Activated CD4-positive, alpha-beta T cell treated with anti-CD3 and anti-CD28 coated beads for 36 hours (primary cell): ENCODE measurements at regions of chr4 and their contacts with region 1.

Region 1: DNA sequence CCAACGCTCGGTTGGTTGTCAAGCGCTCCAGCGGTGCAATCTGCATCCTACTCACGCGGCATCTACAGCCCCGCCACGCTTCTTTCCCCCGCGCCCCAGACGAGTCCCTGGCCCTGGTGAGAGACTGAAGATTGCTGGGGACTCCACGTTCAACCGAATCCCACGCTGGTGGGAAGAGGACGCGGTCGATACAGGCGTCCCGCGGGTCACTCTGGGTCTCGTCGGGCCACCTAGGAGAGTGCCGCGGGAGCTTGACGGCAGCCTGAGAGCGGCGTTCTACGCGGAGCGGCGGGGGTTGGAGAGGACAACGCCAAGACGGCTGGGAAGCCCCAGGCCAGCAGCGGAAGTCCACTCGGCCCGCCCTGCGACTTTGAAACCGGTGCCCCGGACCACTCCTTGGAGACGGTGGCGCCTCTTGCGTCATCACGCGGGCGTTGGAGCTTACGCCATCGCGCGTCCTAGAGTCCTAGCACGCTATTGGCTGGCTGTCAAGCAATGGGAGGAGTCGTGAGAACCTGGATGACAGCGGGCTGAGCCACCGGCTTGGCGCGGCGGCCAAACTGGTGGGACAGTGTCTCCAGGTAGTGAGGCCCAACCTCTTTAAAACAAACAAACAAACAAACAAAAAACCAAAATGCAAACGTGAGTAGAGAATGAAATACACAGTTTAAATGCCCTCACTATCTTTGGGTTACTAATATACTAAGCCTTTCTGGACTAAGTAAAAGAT is at the start of gene SCLT1:
- DNase-seq: peak; percentile 98
- ATAC-seq: peak; percentile 94
- H3K4me3 Mint-ChIP-seq: no peak within 1 kb of the TSS
- H3K27ac Mint-ChIP-seq: peak within 1 kb of the TSS; percentile 35
- H3K4me1 Mint-ChIP-seq: peaks cover 27% of the 10 kb centered on the region
- H3K27me3 Mint-ChIP-seq: no peaks in the 10 kb centered on the region
- total RNA-seq, gene SCLT1: 18.7 to 19.3 TPM

Region 2: GRCh38 chr4:127880764-127881562 is 1212.4 kb before region 1 on chr4 and contains the start of gene PLK4:
- CTCF ChIA-PET with region 1: no interaction called
- POLR2A ChIA-PET with region 1: no interaction called
- intact Hi-C with region 1: loop called in 1 of 2 experiments (anchors 5 kb)
- DNase-seq: peak; percentile 97
- ATAC-seq: peak; percentile 97
- H3K4me3 Mint-ChIP-seq: peak within 1 kb of the TSS; percentile 97
- H3K27ac Mint-ChIP-seq: peak within 1 kb of the TSS; percentile 98
- H3K4me1 Mint-ChIP-seq: peaks cover 24% of the 10 kb centered on the region
- H3K27me3 Mint-ChIP-seq: no peaks in the 10 kb centered on the region
- total RNA-seq, gene PLK4: 44.4 to 52.3 TPM